ENCODE measurements at regions of chr5 and their contacts with region 1.

Region 1: GRCh38 chr5:43008369-43009153 is 31.6 kb downstream of the ANXA2R start:
- DNase-seq: peak; percentile 87 to 97 (median 92)
- ATAC-seq: peak; percentile 63
- H3K4me3 ChIP-seq: peak overlapping the region; percentile 82
- H3K4me3 Mint-ChIP-seq: peak overlapping the region; percentile 92
- H3K27ac ChIP-seq: peak overlapping the region; percentile 91 to 95
- H3K27ac Mint-ChIP-seq: peak overlapping the region; percentile 95
- H3K4me1 ChIP-seq: peaks cover 36% of the 10 kb centered on the region
- H3K4me1 Mint-ChIP-seq: peaks cover 42% of the 10 kb centered on the region
- H3K27me3 ChIP-seq: no peaks in the 10 kb centered on the region
- H3K27me3 Mint-ChIP-seq: no peaks in the 10 kb centered on the region
- CTCF ChIP-seq: no peak

Region 2: GRCh38 chr5:42950440-42951292 is 57.9 kb before region 1 on chr5:
- CTCF ChIA-PET with region 1: interaction called, 15 read pairs
- POLR2A ChIA-PET with region 1: interaction called, 163 read pairs
- intact Hi-C with region 1: loop called in 1 of 2 experiments (anchors 5 kb)
- DNase-seq: peak; percentile 35 to 90 (median 61)
- ATAC-seq: peak; percentile 41
- H3K4me3 ChIP-seq: peak overlapping the region; percentile 75
- H3K4me3 Mint-ChIP-seq: peak overlapping the region; percentile 98
- H3K27ac ChIP-seq: peak overlapping the region; percentile 96 to 98
- H3K27ac Mint-ChIP-seq: peak overlapping the region; percentile 99
- H3K4me1 ChIP-seq: peaks cover 45% of the 10 kb centered on the region
- H3K4me1 Mint-ChIP-seq: peaks cover 30% of the 10 kb centered on the region
- H3K27me3 ChIP-seq: no peaks in the 10 kb centered on the region
- H3K27me3 Mint-ChIP-seq: no peaks in the 10 kb centered on the region
- CTCF ChIP-seq: no peak

Region 3: GRCh38 chr5:43105369-43106289 is 97.1 kb after region 1 on chr5:
- CTCF ChIA-PET with region 1: interaction called, 3 read pairs
- POLR2A ChIA-PET with region 1: interaction called, 18 read pairs
- intact Hi-C with region 1: loop called in 1 of 2 experiments (anchors 5 kb)
- DNase-seq: peak; percentile 85 to 97 (median 88)
- ATAC-seq: peak; percentile 90
- H3K4me3 ChIP-seq: peak overlapping the region; percentile 51
- H3K4me3 Mint-ChIP-seq: peak overlapping the region; percentile 91
- H3K27ac ChIP-seq: no peak overlapping the region
- H3K27ac Mint-ChIP-seq: peak overlapping the region; percentile 78
- H3K4me1 ChIP-seq: peaks cover 36% of the 10 kb centered on the region
- H3K4me1 Mint-ChIP-seq: peaks cover 41% of the 10 kb centered on the region
- H3K27me3 ChIP-seq: no peaks in the 10 kb centered on the region
- H3K27me3 Mint-ChIP-seq: no peaks in the 10 kb centered on the region
- CTCF ChIP-seq: peak; percentile 100

Region 4: DNA sequence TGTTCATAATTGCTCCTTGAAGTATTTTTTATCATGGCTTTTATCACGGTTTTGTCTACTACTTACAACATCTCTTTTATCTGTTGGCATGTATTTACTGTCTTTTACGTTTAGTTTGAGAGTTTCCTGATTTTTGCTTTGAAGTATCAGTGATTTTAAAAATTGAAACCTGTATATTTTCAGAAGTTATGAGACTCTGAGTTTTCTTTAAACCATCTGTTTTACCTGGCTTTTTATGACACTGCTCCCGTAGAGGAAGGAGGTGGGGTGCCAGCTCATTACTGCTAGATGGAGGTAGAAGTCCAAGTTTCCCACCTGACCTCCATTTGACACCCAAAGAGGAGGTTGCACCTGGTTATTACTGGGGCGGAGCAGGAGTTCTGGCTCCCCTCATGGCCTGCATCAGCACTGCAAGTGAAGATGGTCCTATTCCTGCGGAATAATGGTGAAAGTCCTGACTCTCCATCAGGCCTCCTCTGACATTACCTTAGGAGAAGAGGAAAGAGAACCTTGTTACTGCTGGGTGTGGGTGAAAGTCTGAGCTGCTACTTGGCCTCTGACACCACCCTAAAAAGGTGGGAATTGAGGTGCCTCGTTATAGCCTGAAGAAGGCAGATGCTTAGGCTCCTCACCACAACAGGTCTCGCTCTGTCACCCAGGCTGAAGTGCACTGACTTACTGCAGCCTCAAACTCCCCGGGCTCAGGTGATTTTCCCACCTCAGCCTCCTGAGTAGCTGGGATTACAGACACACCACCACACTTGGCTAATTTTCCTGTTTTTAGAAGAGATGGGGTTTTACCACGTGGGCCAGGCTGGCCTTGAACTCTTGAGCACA is 102.3 kb after region 1 on chr5:
- CTCF ChIA-PET with region 1: interaction called, 3 read pairs
- POLR2A ChIA-PET with region 1: interaction called, 18 read pairs
- intact Hi-C with region 1: loop called in 1 of 2 experiments (anchors 5 kb)
- DNase-seq: peak in 11 of 14 experiments; percentile 11 to 72 (median 29)
- ATAC-seq: peak; percentile 87
- H3K4me3 ChIP-seq: no peak overlapping the region
- H3K4me3 Mint-ChIP-seq: peak overlapping the region; percentile 44
- H3K27ac ChIP-seq: peak overlapping the region in 1 of 2 donors; percentile 11
- H3K27ac Mint-ChIP-seq: peak overlapping the region; percentile 74
- H3K4me1 ChIP-seq: peaks cover 25% of the 10 kb centered on the region
- H3K4me1 Mint-ChIP-seq: peaks cover 30% of the 10 kb centered on the region
- H3K27me3 ChIP-seq: no peaks in the 10 kb centered on the region
- H3K27me3 Mint-ChIP-seq: no peaks in the 10 kb centered on the region
- CTCF ChIP-seq: peak; percentile 67

Region 5: GRCh38 chr5:44022622-44023021 is 1014.1 kb after region 1 on chr5:
- CTCF ChIA-PET with region 1: no interaction called
- POLR2A ChIA-PET with region 1: no interaction called
- intact Hi-C with region 1: no loop called
- DNase-seq: no peak
- ATAC-seq: no peak
- H3K4me3 ChIP-seq: no peak overlapping the region
- H3K4me3 Mint-ChIP-seq: no peak overlapping the region
- H3K27ac ChIP-seq: no peak overlapping the region
- H3K27ac Mint-ChIP-seq: no peak overlapping the region
- H3K4me1 ChIP-seq: no peaks in the 10 kb centered on the region
- H3K4me1 Mint-ChIP-seq: no peaks in the 10 kb centered on the region
- H3K27me3 ChIP-seq: no peaks in the 10 kb centered on the region
- H3K27me3 Mint-ChIP-seq: no peaks in the 10 kb centered on the region
- CTCF ChIP-seq: no peak

Measured in CD4-positive, alpha-beta T cell (primary cell).